ENCODE measurements at regions of chr1 and their contacts with region 1.

Region 1: GRCh38 chr1:33610864-33611455 is 138.5 kb downstream of the ZSCAN20 start:
- DNase-seq: no peak
- ATAC-seq: no peak
- H3K4me3 ChIP-seq: no peak overlapping the region
- H3K27ac ChIP-seq: no peak overlapping the region
- H3K4me1 ChIP-seq: no peaks in the 10 kb centered on the region
- H3K27me3 ChIP-seq: peaks cover 2 to 3% of the 10 kb centered on the region in 2 experiments; a peak in 2 of 4 replicates
- CTCF ChIP-seq: no peak
- EP300 ChIP-seq: no peak
- POLR2A ChIP-seq: no peak
- RAD21 ChIP-seq: no peak

Region 2: DNA sequence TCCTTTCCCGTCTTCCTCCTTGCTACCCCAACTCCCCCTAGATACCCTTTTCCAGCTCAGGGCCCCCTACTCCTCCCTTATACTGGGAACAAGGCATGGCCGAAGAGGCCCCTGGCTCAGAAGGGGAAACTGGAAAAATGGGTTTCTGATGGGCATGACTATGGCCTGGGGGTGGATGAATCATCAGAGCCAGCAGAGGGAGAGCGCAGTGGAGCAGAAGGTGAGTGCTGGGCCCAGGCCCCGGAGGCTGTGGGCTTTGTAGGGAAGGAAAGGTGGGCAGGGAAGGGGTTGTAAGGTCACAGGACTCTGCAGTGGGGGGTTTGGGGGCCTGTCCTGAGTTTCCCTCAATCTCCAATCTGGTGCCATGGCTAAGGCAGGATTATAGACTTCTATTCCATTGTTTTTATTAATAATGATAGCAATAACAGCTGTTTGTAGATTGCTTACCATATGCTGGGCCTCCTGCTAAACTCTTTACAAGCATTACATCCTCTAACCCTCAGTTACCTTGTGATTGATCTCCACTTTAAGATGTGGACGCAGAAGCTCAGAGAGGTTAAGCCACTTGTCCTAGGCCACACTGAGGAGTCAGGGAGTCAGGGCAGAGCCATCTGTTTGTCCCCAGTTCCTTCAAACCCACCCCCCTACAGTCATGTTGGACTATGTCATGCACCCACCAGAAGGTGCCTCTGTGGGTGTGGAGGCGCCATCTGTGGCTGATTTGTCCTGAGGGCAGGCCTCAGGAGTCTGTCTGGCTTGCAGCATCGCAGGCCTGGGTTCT is 390.9 kb before region 1 on chr1:
- CTCF ChIA-PET with region 1: no interaction called
- POLR2A ChIA-PET with region 1: no interaction called
- RAD21 ChIA-PET with region 1: no interaction called
- SMC1A ChIA-PET with region 1: no interaction called
- in situ Hi-C with region 1: no loop called
- intact Hi-C with region 1: loop called (anchors 5 kb)
- DNase-seq: no peak
- ATAC-seq: no peak
- H3K4me3 ChIP-seq: no peak overlapping the region
- H3K27ac ChIP-seq: no peak overlapping the region
- H3K4me1 ChIP-seq: no peaks in the 10 kb centered on the region
- H3K27me3 ChIP-seq: no peaks in the 10 kb centered on the region
- CTCF ChIP-seq: no peak
- EP300 ChIP-seq: no peak
- POLR2A ChIP-seq: no peak
- RAD21 ChIP-seq: no peak

Region 3: DNA sequence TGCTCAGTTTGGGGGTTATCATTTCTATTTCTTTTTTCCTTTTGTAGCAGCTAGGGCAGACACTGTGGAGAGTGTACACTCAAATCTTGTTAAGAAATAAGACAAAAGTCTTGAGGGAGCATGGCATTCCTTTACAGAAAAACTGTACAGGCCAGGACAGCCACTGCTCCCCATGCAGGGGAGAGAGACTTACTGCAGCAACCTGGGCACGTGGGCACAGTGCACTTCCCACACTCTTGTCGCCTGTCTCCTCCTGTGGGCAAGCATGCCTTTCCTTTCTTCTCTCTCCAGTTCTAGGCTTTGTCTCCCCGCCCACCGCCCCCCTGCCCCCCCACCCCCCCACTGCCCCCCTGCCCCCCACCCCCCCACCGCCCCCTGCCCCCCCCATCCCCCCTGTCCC is 232.0 kb before region 1 on chr1:
- CTCF ChIA-PET with region 1: no interaction called
- POLR2A ChIA-PET with region 1: no interaction called
- RAD21 ChIA-PET with region 1: no interaction called
- SMC1A ChIA-PET with region 1: no interaction called
- in situ Hi-C with region 1: no loop called
- intact Hi-C with region 1: loop called (anchors 5 kb)
- DNase-seq: peak; percentile 25
- ATAC-seq: no peak
- H3K4me3 ChIP-seq: no peak overlapping the region
- H3K27ac ChIP-seq: no peak overlapping the region
- H3K4me1 ChIP-seq: peaks cover 9% of the 10 kb centered on the region
- H3K27me3 ChIP-seq: no peaks in the 10 kb centered on the region
- CTCF ChIP-seq: no peak
- EP300 ChIP-seq: no peak
- POLR2A ChIP-seq: no peak
- RAD21 ChIP-seq: no peak

Region 4: GRCh38 chr1:33443080-33443704 is 167.8 kb before region 1 on chr1:
- CTCF ChIA-PET with region 1: no interaction called
- POLR2A ChIA-PET with region 1: no interaction called
- RAD21 ChIA-PET with region 1: no interaction called
- SMC1A ChIA-PET with region 1: no interaction called
- in situ Hi-C with region 1: no loop called
- intact Hi-C with region 1: no loop called
- DNase-seq: no peak
- ATAC-seq: no peak
- H3K4me3 ChIP-seq: no peak overlapping the region
- H3K27ac ChIP-seq: no peak overlapping the region
- H3K4me1 ChIP-seq: no peaks in the 10 kb centered on the region; the same call in 1 of the 2 replicates
- H3K27me3 ChIP-seq: peaks cover 4 to 5% of the 10 kb centered on the region in 2 experiments; a peak in 3 of 4 replicates
- CTCF ChIP-seq: no peak
- EP300 ChIP-seq: no peak
- POLR2A ChIP-seq: no peak
- RAD21 ChIP-seq: no peak

Region 5: GRCh38 chr1:33532936-33533335 is 78.0 kb before region 1 on chr1:
- CTCF ChIA-PET with region 1: no interaction called
- POLR2A ChIA-PET with region 1: no interaction called
- RAD21 ChIA-PET with region 1: no interaction called
- SMC1A ChIA-PET with region 1: no interaction called
- in situ Hi-C with region 1: no loop called
- intact Hi-C with region 1: no loop called
- DNase-seq: no peak
- ATAC-seq: no peak
- H3K4me3 ChIP-seq: no peak overlapping the region
- H3K27ac ChIP-seq: no peak overlapping the region
- H3K4me1 ChIP-seq: no peaks in the 10 kb centered on the region
- H3K27me3 ChIP-seq: peaks cover 0 to 3% of the 10 kb centered on the region in 2 experiments; a peak in 1 of 4 replicates
- CTCF ChIP-seq: no peak
- EP300 ChIP-seq: no peak
- POLR2A ChIP-seq: no peak
- RAD21 ChIP-seq: no peak

Region 6: DNA sequence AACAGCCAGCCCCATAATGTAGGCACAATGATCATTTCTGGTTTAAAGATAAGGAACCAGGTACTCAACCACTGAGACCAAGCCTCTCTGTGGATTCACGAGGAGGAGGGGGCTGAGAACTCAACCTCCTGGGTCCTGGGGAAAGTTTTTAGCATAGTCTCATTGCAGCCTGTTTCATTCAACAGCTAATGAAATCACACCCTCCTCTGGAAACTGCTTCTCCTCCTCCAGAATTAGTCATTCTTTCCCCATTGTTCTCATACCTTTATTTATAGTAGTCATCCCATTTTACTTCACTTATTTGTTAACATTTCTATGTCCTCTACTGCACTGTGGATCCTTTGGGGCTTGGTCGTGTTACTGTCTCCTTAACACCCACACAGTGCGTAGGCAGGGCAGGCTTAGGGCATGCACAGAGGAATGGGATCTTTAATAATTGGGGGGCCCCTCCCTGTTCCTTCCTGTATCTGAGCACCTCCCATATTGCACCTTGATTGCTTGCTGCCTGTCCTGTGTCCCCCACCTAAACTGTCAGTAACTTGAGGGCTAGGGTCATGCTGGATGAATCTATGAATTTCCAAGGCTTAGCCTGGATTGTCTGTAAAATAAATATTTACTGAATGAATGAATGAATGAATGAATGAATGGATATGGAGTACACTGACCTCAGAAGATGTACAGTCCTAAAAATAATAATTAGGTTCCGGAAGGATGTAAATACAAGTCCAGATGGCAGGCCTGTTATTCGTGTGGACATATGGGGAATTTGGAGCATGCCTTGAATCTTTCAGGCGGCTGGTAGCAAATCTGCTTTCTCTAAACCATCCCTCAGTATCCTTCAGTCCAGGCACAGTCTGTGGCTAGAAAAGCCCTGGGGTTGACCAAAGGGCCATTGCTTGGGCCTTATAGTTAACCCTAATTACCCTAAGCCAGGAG is 99.1 kb after region 1 on chr1:
- CTCF ChIA-PET with region 1: no interaction called
- POLR2A ChIA-PET with region 1: no interaction called
- RAD21 ChIA-PET with region 1: no interaction called
- SMC1A ChIA-PET with region 1: no interaction called
- in situ Hi-C with region 1: no loop called
- intact Hi-C with region 1: no loop called
- DNase-seq: no peak
- ATAC-seq: no peak
- H3K4me3 ChIP-seq: no peak overlapping the region
- H3K27ac ChIP-seq: no peak overlapping the region
- H3K4me1 ChIP-seq: no peaks in the 10 kb centered on the region
- H3K27me3 ChIP-seq: peaks cover 0 to 2% of the 10 kb centered on the region in 2 experiments; a peak in 2 of 4 replicates
- CTCF ChIP-seq: no peak
- EP300 ChIP-seq: no peak
- POLR2A ChIP-seq: no peak
- RAD21 ChIP-seq: no peak

Measured in GM12878 (cell line).